Caco-2 (cell line): ENCODE measurements at regions of chr18 and their contacts with region 1.

Region 1: GRCh38 chr18:49561289-49562193 is at the start of gene LIPG:
- DNase-seq: peak; percentile 82 to 84
- H3K4me3 ChIP-seq: peak within 1 kb of the TSS; percentile 56
- H3K4me3 Mint-ChIP-seq: peak within 1 kb of the TSS; percentile 98
- H3K27ac Mint-ChIP-seq: peak within 1 kb of the TSS; percentile 92
- H3K4me1 ChIP-seq: no peaks in the 10 kb centered on the region
- H3K4me1 Mint-ChIP-seq: no peaks in the 10 kb centered on the region
- H3K27me3 ChIP-seq: no peaks in the 10 kb centered on the region
- H3K27me3 Mint-ChIP-seq: no peaks in the 10 kb centered on the region
- CTCF ChIP-seq: no peak
- total RNA-seq, gene LIPG: 86.7 and 87.5 TPM in 2 replicates

Region 2: DNA sequence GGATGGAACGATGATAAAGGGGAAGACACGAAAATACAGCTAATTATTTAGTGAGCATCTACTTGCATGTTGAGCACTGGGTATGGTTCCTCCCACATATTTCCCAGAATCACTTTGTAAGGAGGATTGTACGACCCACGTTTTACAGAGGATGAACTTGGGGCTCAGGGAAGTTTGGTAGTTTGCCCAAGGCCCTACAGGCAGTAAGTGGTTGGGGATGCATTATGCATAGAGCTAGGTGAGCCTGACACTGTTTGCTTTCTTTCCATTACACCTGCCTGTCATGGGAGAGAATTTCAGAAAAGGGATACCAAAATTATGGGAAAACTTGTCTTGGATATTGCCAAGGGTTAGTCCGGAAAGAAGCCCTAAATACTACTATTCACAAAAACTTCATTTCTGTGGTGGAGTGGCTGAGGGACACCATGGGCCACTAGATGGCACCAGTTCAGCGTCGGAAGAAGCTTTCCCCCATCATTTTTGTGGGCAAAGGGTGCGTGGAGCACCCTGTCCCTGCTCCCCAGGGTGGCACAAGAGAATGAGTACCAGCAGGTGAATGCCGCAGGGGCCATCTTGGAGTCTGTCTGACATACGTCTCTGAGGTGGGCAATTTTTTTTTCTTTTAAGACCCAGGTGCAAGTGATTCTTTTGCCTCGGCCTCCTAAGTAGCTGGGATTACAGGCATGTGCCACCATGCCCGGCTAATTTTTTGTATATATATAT is 51.0 kb before region 1 on chr18:
- CTCF ChIA-PET with region 1: interaction called, 8 read pairs
- POLR2A ChIA-PET with region 1: no interaction called
- intact Hi-C with region 1: loop called (anchors 5 kb)
- DNase-seq: peak in 1 of 2 experiments; percentile 55
- H3K4me3 ChIP-seq: no peak overlapping the region
- H3K4me3 Mint-ChIP-seq: no peak overlapping the region
- H3K27ac Mint-ChIP-seq: no peak overlapping the region
- H3K4me1 ChIP-seq: no peaks in the 10 kb centered on the region
- H3K4me1 Mint-ChIP-seq: no peaks in the 10 kb centered on the region
- H3K27me3 ChIP-seq: no peaks in the 10 kb centered on the region
- H3K27me3 Mint-ChIP-seq: no peaks in the 10 kb centered on the region
- CTCF ChIP-seq: peak; percentile 47 to 70

Region 3: GRCh38 chr18:49527631-49528327 is 33.8 kb before region 1 on chr18:
- CTCF ChIA-PET with region 1: no interaction called
- POLR2A ChIA-PET with region 1: no interaction called
- intact Hi-C with region 1: loop called (anchors 5 kb)
- DNase-seq: no peak
- H3K4me3 ChIP-seq: no peak overlapping the region
- H3K4me3 Mint-ChIP-seq: peak overlapping the region; percentile 45
- H3K27ac Mint-ChIP-seq: peak overlapping the region; percentile 61
- H3K4me1 ChIP-seq: peaks cover 53% of the 10 kb centered on the region
- H3K4me1 Mint-ChIP-seq: peaks cover 19% of the 10 kb centered on the region
- H3K27me3 ChIP-seq: no peaks in the 10 kb centered on the region
- H3K27me3 Mint-ChIP-seq: no peaks in the 10 kb centered on the region
- CTCF ChIP-seq: no peak